ENCODE measurements at regions of chrX and their contacts with region 1.

Region 1: GRCh38 chrX:65667503-65668376 is at the start of gene MSN:
- DNase-seq: peak; percentile 55
- H3K4me3 ChIP-seq: peak within 1 kb of the TSS; percentile 43 to 83 (median 78)
- H3K27ac ChIP-seq: peak within 1 kb of the TSS; percentile 90
- H3K4me1 ChIP-seq: peaks cover 5% of the 10 kb centered on the region
- H3K27me3 ChIP-seq: no peaks in the 10 kb centered on the region
- CTCF ChIP-seq: no peak
- total RNA-seq, gene MSN: 261 to 317 TPM

Region 2: GRCh38 chrX:65601530-65602220 is 66.1 kb before region 1 on chrX:
- CTCF ChIA-PET with region 1: interaction called, 4 read pairs
- dilution Hi-C with region 1: no loop called
- in situ Hi-C with region 1: loop called in 1 of 2 experiments (anchors 10 kb)
- intact Hi-C with region 1: no loop called
- DNase-seq: peak; percentile 54
- H3K4me3 ChIP-seq: no peak overlapping the region
- H3K27ac ChIP-seq: no peak overlapping the region
- H3K4me1 ChIP-seq: peaks cover 14% of the 10 kb centered on the region
- H3K27me3 ChIP-seq: no peaks in the 10 kb centered on the region
- CTCF ChIP-seq: no peak

Region 3: GRCh38 chrX:65677954-65678469 is 10.3 kb after region 1 on chrX:
- CTCF ChIA-PET with region 1: no interaction called
- dilution Hi-C with region 1: no loop called
- in situ Hi-C with region 1: no loop called
- intact Hi-C with region 1: loop called (anchors 1 kb)
- DNase-seq: peak; percentile 79
- H3K4me3 ChIP-seq: no peak overlapping the region
- H3K27ac ChIP-seq: peak overlapping the region; percentile 75
- H3K4me1 ChIP-seq: peaks cover 40% of the 10 kb centered on the region
- H3K27me3 ChIP-seq: no peaks in the 10 kb centered on the region
- CTCF ChIP-seq: no peak

Measured in mammary epithelial cell (primary cell).